ENCODE measurements at regions of chr3 and their contacts with region 1.

Region 1: DNA sequence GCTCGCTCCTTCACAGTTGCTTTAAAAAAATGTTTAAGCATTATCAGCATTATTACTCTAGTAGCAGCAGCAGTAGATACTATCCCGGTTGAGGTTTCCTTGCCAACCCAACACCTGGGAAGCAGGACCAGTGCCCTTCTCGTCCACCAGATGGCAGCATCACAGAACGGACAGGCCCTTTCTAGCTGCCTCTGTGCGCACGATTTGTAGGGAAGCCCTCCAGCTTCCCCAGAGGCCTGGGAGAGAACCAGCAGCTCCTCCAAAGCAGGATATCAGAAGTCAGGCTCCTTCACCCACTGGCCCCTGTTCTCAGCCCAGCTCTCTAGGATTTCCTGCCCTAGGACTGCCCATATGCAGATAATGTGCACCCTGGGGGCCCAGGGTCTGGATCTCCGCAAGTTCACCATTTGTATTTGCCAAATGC is 16.8 kb upstream of the ESYT3 start:
- H3K4me3 ChIP-seq: no peak overlapping the region
- H3K27ac ChIP-seq: no peak overlapping the region
- H3K4me1 ChIP-seq: no peaks in the 10 kb centered on the region
- CTCF ChIP-seq: peak; percentile 68

Region 2: DNA sequence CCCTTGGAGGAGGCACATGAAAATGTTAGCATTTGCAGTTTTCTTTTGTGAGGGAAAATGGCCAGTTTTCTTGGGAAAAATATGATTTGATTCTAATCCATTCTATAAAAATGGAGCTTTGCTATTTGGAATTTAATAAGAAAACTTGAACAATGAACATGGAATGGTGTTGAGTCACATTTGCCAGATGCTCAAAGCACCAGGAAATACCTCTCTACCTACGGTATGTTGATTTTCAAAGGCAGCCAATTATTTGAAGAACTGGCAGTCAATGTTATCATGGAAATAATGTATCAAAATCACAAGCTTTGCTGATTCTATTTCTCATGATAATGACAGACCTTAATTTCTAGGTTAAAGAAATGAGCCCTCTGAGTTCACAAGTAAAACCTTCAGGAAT is 102.8 kb before region 1 on chr3:
- CTCF ChIA-PET with region 1: no interaction called
- POLR2A ChIA-PET with region 1: no interaction called
- H3K4me3 ChIP-seq: no peak overlapping the region
- H3K27ac ChIP-seq: no peak overlapping the region
- H3K4me1 ChIP-seq: no peaks in the 10 kb centered on the region
- CTCF ChIP-seq: no peak

Region 3: GRCh38 chr3:138429665-138430064 is 12.1 kb after region 1 on chr3:
- CTCF ChIA-PET with region 1: interaction called, 11 read pairs
- POLR2A ChIA-PET with region 1: no interaction called
- H3K4me3 ChIP-seq: no peak overlapping the region
- H3K27ac ChIP-seq: no peak overlapping the region
- H3K4me1 ChIP-seq: no peaks in the 10 kb centered on the region
- CTCF ChIP-seq: no peak

Region 4: GRCh38 chr3:138442433-138442832 is 24.9 kb after region 1 on chr3:
- CTCF ChIA-PET with region 1: interaction called, 23 read pairs
- POLR2A ChIA-PET with region 1: no interaction called
- H3K4me3 ChIP-seq: no peak overlapping the region
- H3K27ac ChIP-seq: no peak overlapping the region
- H3K4me1 ChIP-seq: no peaks in the 10 kb centered on the region
- CTCF ChIP-seq: no peak

Measured in HEK293 (cell line).